ENCODE measurements at regions of chr22 and their contacts with region 1.

Region 1: GRCh38 chr22:26471522-26471921 is 12.1 kb downstream of the HPS4 start:
- DNase-seq: no peak
- H3K4me3 ChIP-seq: no peak overlapping the region
- H3K27ac ChIP-seq: peak overlapping the region in 1 of 4 donors; percentile 10
- H3K4me1 ChIP-seq: no peaks in the 10 kb centered on the region
- H3K27me3 ChIP-seq: no peaks in the 10 kb centered on the region
- CTCF ChIP-seq: no peak
- POLR2A ChIP-seq: no peak

Region 2: GRCh38 chr22:26426924-26427323 is 44.6 kb before region 1 on chr22:
- intact Hi-C with region 1: loop called (anchors 2 kb)
- DNase-seq: no peak
- H3K4me3 ChIP-seq: no peak overlapping the region
- H3K27ac ChIP-seq: no peak overlapping the region
- H3K4me1 ChIP-seq: peaks cover 10 to 19% (median 15%) of the 10 kb centered on the region in 3 donors
- H3K27me3 ChIP-seq: peaks cover 0 to 52% (median 0%) of the 10 kb centered on the region in 4 donors
- CTCF ChIP-seq: no peak
- POLR2A ChIP-seq: no peak

Measured in esophagus squamous epithelium (tissue), 5 donors.